Activated T-helper 1 cell treated with anti-CD3 and anti-CD28 coated beads, Interleukin-12 subunit alpha, Interleukin-12 subunit beta, Interleukin-2, Interleukin-4 antibody, amounts not matched to agents 30 ng/mL and 10 ng/mL and 1 ng/mL, durations not matched to agents 14 hours and 24 hours and 36 hours (primary cell): ENCODE measurements at regions of chr11 and their contacts with region 1.

Region 1: GRCh38 chr11:124837491-124837856 is 27.8 kb upstream of the ROBO3 start:
- DNase-seq: no peak
- H3K4me3 Mint-ChIP-seq: no peak overlapping the region
- H3K27ac Mint-ChIP-seq: no peak overlapping the region
- H3K4me1 Mint-ChIP-seq: peaks cover 17% of the 10 kb centered on the region
- H3K27me3 Mint-ChIP-seq: peaks cover 59% of the 10 kb centered on the region

Region 2: DNA sequence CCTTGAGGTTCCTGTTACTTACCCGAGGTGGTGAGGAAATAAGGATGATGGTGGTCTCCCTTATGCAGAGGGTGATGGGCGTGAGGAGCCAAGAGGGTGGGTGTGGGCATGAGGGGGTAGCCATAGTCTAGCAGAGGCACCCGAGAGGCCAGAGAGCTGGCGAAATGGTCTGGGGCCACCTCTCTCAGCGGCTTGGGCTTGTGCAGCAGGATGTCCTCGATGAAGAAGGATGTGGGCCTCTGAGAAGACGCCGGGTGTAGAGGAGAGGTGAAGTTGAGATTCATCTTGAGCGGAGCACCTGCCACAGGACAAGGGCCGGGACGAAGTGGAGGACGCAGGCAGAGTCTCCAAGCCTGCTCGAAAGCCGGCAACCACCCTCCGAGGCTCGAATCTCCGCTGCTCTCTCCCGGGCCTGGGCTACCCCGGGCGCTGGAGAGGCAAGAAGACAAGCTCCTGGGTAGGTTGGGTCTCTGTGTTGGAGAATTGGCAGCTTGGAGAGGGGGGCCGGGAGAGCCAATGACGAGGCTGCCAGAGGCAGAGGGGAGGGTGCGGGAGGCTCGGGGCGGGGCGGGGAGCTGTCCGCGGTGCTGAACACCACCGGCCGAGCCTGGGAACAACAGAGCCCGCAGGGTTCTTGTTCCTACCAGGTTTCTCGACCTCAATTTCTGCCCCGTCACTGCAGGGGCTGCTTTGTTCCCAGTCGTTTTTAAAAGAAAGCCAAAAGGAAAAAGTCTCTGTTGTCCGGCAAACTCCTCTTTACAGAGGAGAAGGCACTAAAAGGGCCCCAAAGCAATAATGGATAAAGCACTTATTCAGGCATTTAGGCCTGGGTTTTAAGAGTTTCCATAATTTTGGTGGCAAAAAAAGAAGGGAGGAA is 1855.8 kb before region 1 on chr11 and contains the start of gene BSX:
- intact Hi-C with region 1: loop called (anchors 10 kb)
- DNase-seq: peak; percentile 21
- H3K4me3 Mint-ChIP-seq: no peak within 1 kb of the TSS
- H3K27ac Mint-ChIP-seq: no peak within 1 kb of the TSS
- H3K4me1 Mint-ChIP-seq: peaks cover 25% of the 10 kb centered on the region
- H3K27me3 Mint-ChIP-seq: peaks cover 90% of the 10 kb centered on the region
- total RNA-seq, gene BSX: not detected in 2 replicates

Region 3: DNA sequence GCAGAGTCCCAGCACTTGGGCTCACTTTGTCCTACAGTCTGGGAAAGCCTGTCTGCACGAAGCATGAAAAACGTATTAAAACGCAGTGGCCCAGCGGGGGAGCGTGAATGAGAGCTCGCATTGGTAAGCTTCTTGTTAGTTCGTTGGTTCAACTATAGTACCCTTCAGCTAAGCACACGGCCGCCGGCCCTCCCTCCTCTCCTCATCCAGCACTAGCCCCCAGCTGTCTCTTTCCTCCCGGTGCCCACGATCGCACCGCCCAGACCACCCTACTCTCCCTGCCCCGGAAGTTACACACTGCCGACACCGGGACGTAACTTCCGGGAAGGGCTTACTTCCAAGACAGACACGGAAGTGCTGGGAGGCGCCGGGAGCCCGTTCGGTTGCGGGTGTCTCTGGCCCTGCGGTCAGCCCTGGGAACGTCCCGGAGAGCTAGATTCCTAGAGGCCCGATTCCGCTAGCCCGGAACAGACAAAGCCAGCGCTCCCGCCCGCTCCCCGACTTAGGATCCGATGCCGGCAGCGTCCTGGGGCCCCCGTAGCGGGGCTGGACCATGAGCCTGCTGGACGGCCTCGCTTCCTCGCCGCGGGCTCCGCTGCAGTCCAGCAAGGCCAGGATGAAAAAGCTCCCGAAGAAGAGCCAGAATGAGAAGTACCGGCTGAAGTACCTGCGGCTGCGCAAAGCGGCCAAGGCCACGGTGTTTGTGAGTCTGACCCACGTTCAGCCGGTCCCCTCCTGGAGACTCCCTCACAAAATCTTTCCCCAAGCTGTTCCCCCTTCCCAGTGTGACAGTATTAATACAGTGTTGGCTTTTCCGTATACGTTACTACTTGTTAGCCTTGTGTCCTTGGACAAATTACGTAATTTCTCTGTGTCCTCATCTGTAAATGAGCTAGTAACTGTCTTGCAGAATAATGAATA is 214.7 kb before region 1 on chr11 and contains the start of gene TBRG1:
- intact Hi-C with region 1: loop called (anchors 5 kb)
- DNase-seq: peak; percentile 80
- H3K4me3 Mint-ChIP-seq: peak within 1 kb of the TSS; percentile 97
- H3K27ac Mint-ChIP-seq: peak within 1 kb of the TSS; percentile 95
- H3K4me1 Mint-ChIP-seq: peaks cover 29% of the 10 kb centered on the region
- H3K27me3 Mint-ChIP-seq: peaks cover 14% of the 10 kb centered on the region
- total RNA-seq, gene TBRG1: 35.1 and 35.4 TPM in 2 replicates

Region 4: GRCh38 chr11:124746621-124747243 is 90.7 kb before region 1 on chr11:
- intact Hi-C with region 1: loop called (anchors 1 kb)
- DNase-seq: peak; percentile 64
- H3K4me3 Mint-ChIP-seq: peak overlapping the region; percentile 89
- H3K27ac Mint-ChIP-seq: peak overlapping the region; percentile 86
- H3K4me1 Mint-ChIP-seq: peaks cover 28% of the 10 kb centered on the region
- H3K27me3 Mint-ChIP-seq: peaks cover 12% of the 10 kb centered on the region

Region 5: GRCh38 chr11:124800226-124800929 is 37.1 kb before region 1 on chr11 and contains the start of gene MSANTD2:
- intact Hi-C with region 1: loop called (anchors 1 kb)
- DNase-seq: peak; percentile 79
- H3K4me3 Mint-ChIP-seq: peak within 1 kb of the TSS; percentile 91
- H3K27ac Mint-ChIP-seq: peak within 1 kb of the TSS; percentile 92
- H3K4me1 Mint-ChIP-seq: peaks cover 28% of the 10 kb centered on the region
- H3K27me3 Mint-ChIP-seq: peaks cover 8% of the 10 kb centered on the region
- total RNA-seq, gene MSANTD2: 8.9 and 9.7 TPM in 2 replicates

Region 6: GRCh38 chr11:124875943-124876817 is 38.7 kb after region 1 on chr11:
- intact Hi-C with region 1: loop called (anchors 1 kb)
- DNase-seq: peak; percentile 73
- H3K4me3 Mint-ChIP-seq: peak overlapping the region; percentile 81
- H3K27ac Mint-ChIP-seq: peak overlapping the region; percentile 72
- H3K4me1 Mint-ChIP-seq: peaks cover 12% of the 10 kb centered on the region
- H3K27me3 Mint-ChIP-seq: peaks cover 46% of the 10 kb centered on the region